ENCODE measurements at regions of chr11 and their contacts with region 1.

Region 1: GRCh38 chr11:62315431-62315830 is 16.6 kb upstream of the SCGB1D4 start:
- DNase-seq: no peak
- CTCF ChIP-seq: no peak

Region 2: DNA sequence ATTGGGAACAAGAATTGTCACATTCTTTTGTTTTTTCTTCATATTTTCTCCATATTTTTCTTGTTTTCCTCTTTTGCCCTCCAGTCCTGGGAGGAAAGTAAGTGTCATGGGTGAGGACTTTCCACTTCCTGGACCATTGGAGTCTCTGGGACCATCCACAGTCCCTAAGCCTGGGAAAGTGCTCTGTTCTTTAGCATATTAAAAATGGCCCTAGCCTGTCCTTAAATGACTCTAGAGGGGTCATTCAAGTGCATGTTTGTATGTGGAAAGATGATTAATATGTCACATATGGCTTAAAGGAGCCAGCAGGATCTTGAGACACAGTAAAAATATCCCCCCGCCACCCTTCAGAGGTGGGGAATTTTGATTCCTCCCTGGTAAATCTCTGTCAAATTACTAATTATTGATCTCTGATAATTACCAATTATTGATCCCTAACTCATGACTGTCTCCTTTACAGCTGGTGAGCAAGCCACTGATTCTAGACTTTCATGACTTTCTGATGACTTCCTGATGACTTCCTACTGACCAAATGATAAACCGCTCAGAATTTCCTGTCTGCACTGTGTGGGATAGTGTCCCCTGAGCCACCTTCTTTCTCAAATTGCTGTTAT is 145.4 kb before region 1 on chr11:
- in situ Hi-C with region 1: loop called (anchors 10 kb)
- DNase-seq: no peak
- CTCF ChIP-seq: no peak

Region 3: DNA sequence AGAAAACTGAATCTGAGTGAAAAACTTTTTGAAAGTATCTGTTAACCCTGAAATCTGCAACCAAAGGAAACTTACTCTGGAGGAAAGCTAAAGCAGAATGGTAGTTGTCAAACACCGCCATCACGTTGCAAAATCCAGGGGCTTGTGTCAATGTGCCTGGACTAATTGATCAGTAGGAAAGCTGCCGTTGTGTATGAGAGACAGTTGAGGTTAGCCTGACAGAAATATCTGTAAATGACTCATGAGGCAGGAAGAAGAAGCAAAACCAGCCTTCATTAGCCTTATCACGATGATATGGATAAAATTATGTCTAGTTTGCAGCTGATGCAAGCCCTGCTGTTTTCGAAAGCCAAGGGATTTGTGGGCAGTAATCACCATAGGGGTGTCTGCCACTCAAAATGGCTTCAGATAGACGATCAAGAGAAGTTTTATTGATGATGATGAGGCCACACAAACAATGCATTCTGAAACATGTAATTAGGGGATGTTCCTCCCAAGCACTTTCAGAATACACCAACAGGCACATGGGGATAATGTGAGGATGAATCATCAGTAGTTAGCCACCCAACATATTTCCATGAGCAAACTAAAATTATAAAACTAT is 112.3 kb after region 1 on chr11:
- in situ Hi-C with region 1: no loop called
- DNase-seq: peak; percentile 49
- CTCF ChIP-seq: no peak

Measured in GM13976 (cell line).